MCF 10A (cell line): ENCODE measurements at regions of chr2 and their contacts with region 1.

Region 1: DNA sequence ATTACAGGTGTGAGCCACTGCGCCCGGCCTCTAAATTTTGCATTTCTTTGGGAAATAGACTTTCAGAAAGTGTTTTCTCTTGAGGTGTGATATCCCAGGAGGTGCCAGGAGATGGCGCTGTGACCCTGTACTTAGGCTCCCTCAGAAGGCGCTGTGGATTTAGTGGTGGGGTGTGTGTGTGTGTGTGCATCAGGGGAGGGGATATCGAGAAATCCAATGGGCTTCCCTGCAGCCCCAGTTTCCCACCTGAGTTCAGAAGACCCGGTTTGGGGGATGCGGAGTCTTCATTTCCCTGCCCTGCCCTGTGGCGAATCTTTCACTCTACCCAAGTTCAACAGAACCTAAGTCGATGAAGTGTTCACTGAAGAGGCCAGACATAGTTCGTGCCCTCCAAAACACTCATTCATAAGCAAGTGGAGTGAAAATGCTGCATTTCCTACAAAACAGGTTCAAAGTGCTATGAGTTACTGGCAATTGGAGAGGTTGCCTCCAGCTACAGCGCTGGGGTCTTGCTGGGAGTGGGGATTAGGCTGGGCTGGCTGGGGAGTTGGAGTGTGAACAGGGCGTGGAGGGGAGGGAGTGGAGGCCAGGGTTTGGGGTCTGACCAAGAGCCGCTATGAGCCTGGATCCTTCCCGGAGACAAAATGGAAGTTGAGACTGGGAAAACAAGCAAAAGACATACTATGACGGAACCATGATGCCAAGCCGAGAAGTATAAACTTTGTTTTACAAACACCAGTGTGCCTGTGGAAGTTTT is 6.5 kb upstream of the WNT6 start:
- DNase-seq: peak; percentile 67
- H3K4me3 Mint-ChIP-seq: no peak overlapping the region
- H3K27ac Mint-ChIP-seq: no peak overlapping the region
- H3K4me1 Mint-ChIP-seq: peaks cover 23% of the 10 kb centered on the region
- H3K27me3 Mint-ChIP-seq: peaks cover 5% of the 10 kb centered on the region
- CTCF ChIP-seq: peak; percentile 89

Region 2: GRCh38 chr2:218648088-218648786 is 204.9 kb before region 1 on chr2:
- CTCF ChIA-PET with region 1: interaction called, 20 read pairs
- POLR2A ChIA-PET with region 1: no interaction called
- intact Hi-C with region 1: no loop called
- DNase-seq: peak; percentile 68
- H3K4me3 Mint-ChIP-seq: no peak overlapping the region
- H3K27ac Mint-ChIP-seq: no peak overlapping the region
- H3K4me1 Mint-ChIP-seq: no peaks in the 10 kb centered on the region
- H3K27me3 Mint-ChIP-seq: no peaks in the 10 kb centered on the region
- CTCF ChIP-seq: peak; percentile 67

Region 3: DNA sequence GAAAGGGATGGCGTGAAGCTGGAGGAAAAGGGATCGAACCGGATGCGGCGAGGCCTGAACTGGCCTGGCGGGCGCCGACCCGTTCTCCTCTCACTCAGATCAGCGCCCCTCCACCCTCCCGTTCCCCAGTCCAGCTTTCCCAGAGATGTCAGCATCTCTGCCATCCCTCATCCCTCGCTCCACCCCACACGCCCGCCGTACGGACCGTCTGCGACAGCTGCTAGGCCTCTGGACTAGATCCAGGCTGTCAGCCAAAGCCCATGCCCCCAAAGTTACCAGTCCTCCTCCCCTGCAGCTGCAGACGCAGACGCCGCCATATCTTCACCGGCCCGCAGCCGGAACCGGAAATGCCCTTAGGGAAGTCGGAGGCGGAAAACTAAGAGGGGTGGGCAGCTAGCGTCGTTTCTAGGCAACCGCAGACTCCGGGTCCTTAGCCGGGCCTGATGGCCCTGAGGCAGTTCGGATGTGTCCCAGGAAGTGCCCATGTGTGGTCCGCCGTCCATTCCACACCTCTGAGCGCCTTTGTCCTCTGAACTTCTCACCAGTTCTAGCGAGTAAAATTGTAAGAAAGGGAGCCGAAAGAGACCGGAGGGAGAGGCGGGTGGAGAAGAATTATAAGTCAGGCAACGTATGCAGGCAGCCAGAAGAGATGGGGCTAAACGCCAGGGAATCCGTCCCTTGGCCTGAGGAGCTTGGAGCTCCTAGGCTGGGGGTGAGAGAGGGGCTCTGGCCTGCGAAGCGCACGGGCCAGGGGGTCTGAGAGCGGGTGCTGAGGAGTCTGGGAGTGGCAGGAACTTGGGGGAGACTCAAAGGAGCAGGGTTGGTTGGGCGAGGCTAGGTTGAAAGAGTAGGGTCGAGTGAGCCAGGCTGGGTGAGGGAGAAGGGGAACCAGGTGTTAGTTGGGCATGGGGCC is 181.2 kb before region 1 on chr2 and contains the starts of genes RNF25 and STK36:
- CTCF ChIA-PET with region 1: interaction called, 12 read pairs
- POLR2A ChIA-PET with region 1: interaction called, 4 read pairs
- intact Hi-C with region 1: no loop called
- DNase-seq: peak; percentile 66
- H3K4me3 Mint-ChIP-seq: peak within 1 kb of the TSS; percentile 96
- H3K27ac Mint-ChIP-seq: peak within 1 kb of the TSS; percentile 97
- H3K4me1 Mint-ChIP-seq: peaks cover 18% of the 10 kb centered on the region
- H3K27me3 Mint-ChIP-seq: no peaks in the 10 kb centered on the region
- CTCF ChIP-seq: no peak
- total RNA-seq, gene RNF25: 58.9 and 60.8 TPM in 2 replicates
- total RNA-seq, gene STK36: 20.7 and 35.1 TPM in 2 replicates

Region 4: DNA sequence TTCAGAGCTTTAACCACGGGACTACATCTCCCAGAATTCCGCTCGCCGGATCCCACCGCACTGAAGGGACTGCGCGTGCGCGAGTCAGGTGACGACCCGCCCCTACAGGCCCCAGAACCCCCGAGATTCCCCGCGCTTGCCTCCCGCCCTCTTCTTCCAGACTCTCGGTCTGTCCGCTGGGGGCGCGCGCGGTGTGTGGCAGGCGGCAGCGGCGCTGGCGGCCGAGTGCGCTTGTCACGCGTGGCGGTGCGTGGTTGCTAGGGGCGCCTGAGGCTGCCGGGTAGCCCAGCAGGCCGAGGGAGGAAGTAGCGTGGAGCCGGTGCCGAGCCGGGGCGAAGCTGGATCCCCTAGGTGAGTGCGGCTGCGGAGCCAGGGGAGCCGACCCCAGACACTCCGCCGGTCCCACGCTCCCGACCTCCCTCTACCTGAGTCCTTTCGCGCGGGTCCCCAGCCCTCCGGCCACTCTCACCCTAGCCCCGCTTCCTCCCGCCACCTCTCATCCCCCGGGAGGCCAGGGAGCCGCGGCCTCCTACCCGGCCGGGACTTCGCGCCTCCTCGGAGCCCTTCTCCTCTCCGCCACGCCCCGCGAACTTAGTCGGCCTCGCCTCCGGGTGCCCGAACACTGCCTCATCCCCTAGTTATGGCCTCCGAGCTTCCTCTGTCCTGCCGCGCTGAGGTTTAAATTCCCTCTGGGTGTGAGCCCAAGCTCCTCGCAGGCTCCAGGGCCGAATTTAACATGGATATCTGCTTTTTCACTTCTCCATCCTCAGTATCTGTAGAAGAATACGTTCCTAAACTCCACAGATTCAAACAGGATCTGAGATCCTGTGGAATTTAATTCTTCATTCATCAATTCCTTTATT is 142.2 kb before region 1 on chr2 and contains the start of gene TTLL4:
- CTCF ChIA-PET with region 1: interaction called, 41 read pairs
- POLR2A ChIA-PET with region 1: interaction called, 8 read pairs
- intact Hi-C with region 1: no loop called
- DNase-seq: peak; percentile 97
- H3K4me3 Mint-ChIP-seq: peak within 1 kb of the TSS; percentile 98
- H3K27ac Mint-ChIP-seq: peak within 1 kb of the TSS; percentile 92
- H3K4me1 Mint-ChIP-seq: peaks cover 15% of the 10 kb centered on the region
- H3K27me3 Mint-ChIP-seq: no peaks in the 10 kb centered on the region
- CTCF ChIP-seq: peak; percentile 70
- total RNA-seq, gene TTLL4: 33.6 and 38.2 TPM in 2 replicates

Region 5: DNA sequence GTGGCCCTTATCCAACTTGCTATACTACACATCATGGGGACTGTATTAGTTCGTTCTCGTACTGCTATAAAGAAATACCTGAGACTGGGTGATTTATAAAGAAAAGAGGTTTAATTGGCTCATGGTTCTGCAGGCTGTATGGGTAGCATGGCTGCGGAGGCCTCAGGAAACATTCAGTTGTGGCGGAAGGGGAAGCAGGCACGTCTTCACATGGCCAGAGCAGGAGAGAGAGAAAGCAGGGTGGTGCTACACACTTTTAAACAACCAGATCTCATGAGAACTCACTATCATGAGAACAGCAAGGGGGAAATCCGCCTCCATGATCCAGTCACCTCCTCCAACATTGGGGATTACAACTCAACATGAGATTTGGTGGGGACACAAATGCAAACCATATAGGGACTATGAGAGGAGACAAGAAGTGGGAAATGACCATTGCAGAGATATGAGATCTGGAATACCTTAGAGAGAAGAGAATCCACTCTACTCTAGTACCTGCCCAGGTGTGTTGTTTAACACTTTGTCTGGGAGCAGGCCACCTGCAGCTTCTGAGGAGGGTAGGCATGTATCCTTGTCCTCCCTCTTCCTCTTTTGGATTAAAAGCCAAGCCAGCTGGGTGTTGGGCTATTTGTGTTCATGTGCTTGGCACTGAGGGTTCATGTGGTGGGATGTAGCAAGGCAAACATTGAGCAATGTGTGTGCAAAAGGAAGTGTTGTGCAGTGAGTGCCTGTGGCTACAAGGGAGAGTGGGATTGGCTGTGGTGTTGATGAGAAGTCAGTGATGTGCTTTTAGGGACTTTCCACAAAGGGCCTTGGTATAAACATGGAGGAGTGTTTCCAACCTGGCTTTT is 119.7 kb before region 1 on chr2:
- CTCF ChIA-PET with region 1: interaction called, 17 read pairs
- POLR2A ChIA-PET with region 1: interaction called, 7 read pairs
- intact Hi-C with region 1: no loop called
- DNase-seq: peak; percentile 91
- H3K4me3 Mint-ChIP-seq: peak overlapping the region; percentile 38
- H3K27ac Mint-ChIP-seq: peak overlapping the region; percentile 83
- H3K4me1 Mint-ChIP-seq: peaks cover 37% of the 10 kb centered on the region
- H3K27me3 Mint-ChIP-seq: no peaks in the 10 kb centered on the region
- CTCF ChIP-seq: no peak

Region 6: GRCh38 chr2:218898109-218898878 is 45.2 kb after region 1 on chr2:
- CTCF ChIA-PET with region 1: interaction called, 61 read pairs
- POLR2A ChIA-PET with region 1: interaction called, 4 read pairs
- intact Hi-C with region 1: loop called (anchors 1 kb)
- DNase-seq: peak; percentile 53
- H3K4me3 Mint-ChIP-seq: no peak overlapping the region
- H3K27ac Mint-ChIP-seq: no peak overlapping the region
- H3K4me1 Mint-ChIP-seq: peaks cover 43% of the 10 kb centered on the region
- H3K27me3 Mint-ChIP-seq: peaks cover 23% of the 10 kb centered on the region
- CTCF ChIP-seq: peak; percentile 97

Region 7: DNA sequence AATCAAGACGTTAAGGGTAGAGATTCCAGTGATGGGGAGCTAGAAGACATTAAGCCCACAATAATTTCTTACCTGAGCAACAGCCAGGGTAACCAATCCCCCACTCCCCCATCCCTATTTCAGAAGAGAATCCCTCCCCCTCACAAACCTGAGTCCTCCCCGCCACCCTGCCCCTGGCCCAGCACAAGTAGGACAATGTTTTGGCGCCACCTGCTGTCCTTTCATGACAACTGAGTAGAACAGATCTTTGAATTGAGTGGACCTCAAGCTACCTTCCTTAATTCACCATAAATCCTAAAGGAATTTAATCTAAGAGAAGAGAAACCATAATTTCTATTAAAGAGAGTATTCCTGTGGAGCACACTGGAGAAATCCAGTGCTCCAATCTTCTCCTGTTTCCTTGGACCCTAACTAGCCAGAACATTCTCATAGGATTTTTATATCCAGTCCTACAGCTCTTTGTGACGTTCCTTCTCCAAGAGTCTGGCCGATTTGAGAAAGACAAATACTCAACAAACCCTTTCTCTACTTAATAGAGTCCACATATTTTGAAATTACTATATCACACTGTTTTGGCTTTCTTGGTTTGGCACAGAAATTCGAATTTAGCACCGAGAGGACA is 266.4 kb after region 1 on chr2:
- CTCF ChIA-PET with region 1: interaction called, 3 read pairs
- POLR2A ChIA-PET with region 1: no interaction called
- intact Hi-C with region 1: loop called (anchors 2 kb)
- DNase-seq: peak; percentile 75
- H3K4me3 Mint-ChIP-seq: no peak overlapping the region
- H3K27ac Mint-ChIP-seq: no peak overlapping the region
- H3K4me1 Mint-ChIP-seq: peaks cover 15% of the 10 kb centered on the region
- H3K27me3 Mint-ChIP-seq: no peaks in the 10 kb centered on the region
- CTCF ChIP-seq: peak; percentile 74

Region 8: DNA sequence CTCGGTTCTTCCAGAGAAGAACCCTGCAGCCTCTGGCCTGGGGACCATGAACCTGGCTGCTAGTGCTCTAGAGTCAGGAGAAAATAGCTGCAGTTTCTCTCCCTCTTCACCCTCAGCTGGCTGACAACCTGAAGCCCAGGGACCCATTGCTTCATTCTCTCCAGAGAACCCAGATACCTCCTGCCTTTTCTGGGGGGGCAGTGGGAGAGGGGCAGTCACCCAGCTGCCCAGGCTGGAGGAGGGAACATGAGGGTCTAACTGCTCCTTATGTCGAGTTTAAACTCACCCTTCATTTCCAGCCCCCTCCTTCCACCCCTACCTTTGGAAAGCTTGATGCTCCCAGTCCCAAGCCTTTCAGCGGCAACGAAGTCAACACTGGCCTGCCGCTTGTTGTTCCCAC is 345.9 kb after region 1 on chr2:
- CTCF ChIA-PET with region 1: no interaction called
- POLR2A ChIA-PET with region 1: no interaction called
- intact Hi-C with region 1: no loop called
- DNase-seq: no peak
- H3K4me3 Mint-ChIP-seq: no peak overlapping the region
- H3K27ac Mint-ChIP-seq: no peak overlapping the region
- H3K4me1 Mint-ChIP-seq: no peaks in the 10 kb centered on the region
- H3K27me3 Mint-ChIP-seq: no peaks in the 10 kb centered on the region
- CTCF ChIP-seq: no peak